ENCODE measurements at regions of chr1 and their contacts with region 1.

Region 1: DNA sequence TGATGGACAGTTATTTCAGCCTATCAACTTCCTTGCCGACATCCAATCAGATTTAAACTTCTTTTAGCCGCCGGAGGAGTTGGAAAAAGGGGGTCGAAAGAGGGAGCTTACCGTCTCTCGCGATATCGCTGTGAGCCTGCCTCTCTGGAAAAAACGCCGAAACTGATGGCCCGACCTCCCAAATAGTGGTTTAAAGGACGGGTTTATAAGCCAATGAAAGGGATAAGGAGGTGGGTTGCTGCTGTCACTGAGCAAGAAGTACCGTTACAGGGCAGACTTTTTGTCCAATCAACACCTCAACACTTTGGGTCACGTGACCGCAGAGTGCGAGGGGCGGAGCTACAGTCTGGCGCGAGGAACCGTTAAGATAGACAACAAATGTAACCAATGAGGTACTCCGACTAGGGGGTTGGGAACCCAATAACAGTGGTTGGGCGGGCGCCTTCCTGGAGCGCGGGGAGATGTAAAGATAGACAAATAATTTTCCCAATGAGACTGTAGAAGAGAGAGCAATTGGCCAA is at the start of gene RBM15:
- DNase-seq: peak; percentile 100
- H3K4me3 Mint-ChIP-seq: no peak within 1 kb of the TSS
- H3K27ac Mint-ChIP-seq: no peak within 1 kb of the TSS
- H3K4me1 Mint-ChIP-seq: peaks cover 39% of the 10 kb centered on the region
- H3K27me3 Mint-ChIP-seq: no peaks in the 10 kb centered on the region
- CTCF ChIP-seq: no peak
- total RNA-seq, gene RBM15: 31.4 and 35.9 TPM in 2 replicates

Region 2: DNA sequence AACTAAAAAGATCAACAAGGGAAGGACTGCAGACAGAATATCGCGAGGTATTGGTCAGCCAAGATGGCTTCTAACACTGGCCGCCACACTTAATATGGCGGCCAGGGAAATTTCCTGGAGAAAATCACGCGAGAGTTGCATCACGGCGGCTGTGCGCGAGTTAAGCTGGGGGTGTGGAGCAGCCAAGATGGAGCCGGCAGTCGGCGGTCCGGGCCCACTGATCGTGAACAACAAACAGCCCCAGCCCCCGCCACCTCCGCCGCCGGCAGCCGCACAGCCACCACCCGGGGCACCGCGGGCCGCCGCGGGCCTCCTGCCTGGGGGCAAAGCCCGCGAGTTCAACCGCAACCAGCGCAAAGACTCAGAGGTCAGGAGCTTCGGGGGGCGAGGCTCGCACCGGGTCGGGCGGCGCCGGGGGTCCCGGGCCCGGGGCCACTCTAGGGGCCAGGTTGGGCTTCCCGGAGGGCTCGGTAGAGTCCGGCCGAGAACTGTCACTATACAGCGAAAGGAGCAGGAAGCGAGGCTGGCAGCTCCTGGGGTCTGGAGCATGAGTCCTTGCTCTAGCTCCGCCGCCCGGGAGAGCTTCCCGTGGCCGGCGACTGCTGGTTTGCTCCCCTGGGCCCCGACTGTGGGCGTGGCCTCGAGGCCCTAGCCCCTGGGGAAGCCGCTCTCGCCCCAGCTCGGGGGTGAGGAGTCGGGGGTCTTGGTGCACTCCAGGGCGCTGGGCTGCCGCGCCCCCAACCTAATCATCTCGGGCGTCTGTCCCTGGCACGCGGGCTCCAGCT is 304.3 kb before region 1 on chr1 and contains the start of gene STRIP1:
- CTCF ChIA-PET with region 1: no interaction called
- POLR2A ChIA-PET with region 1: interaction called, 18 read pairs
- intact Hi-C with region 1: no loop called
- DNase-seq: peak; percentile 96
- H3K4me3 Mint-ChIP-seq: peak within 1 kb of the TSS; percentile 97
- H3K27ac Mint-ChIP-seq: peak within 1 kb of the TSS; percentile 94
- H3K4me1 Mint-ChIP-seq: peaks cover 18% of the 10 kb centered on the region
- H3K27me3 Mint-ChIP-seq: no peaks in the 10 kb centered on the region
- CTCF ChIP-seq: no peak
- total RNA-seq, gene STRIP1: 35.6 and 40.6 TPM in 2 replicates

Region 3: GRCh38 chr1:110176299-110176956 is 162.5 kb before region 1 on chr1:
- CTCF ChIA-PET with region 1: no interaction called
- POLR2A ChIA-PET with region 1: no interaction called
- intact Hi-C with region 1: no loop called
- DNase-seq: peak; percentile 59
- H3K4me3 Mint-ChIP-seq: no peak overlapping the region
- H3K27ac Mint-ChIP-seq: no peak overlapping the region
- H3K4me1 Mint-ChIP-seq: no peaks in the 10 kb centered on the region
- H3K27me3 Mint-ChIP-seq: peaks cover 11% of the 10 kb centered on the region
- CTCF ChIP-seq: no peak

Region 4: DNA sequence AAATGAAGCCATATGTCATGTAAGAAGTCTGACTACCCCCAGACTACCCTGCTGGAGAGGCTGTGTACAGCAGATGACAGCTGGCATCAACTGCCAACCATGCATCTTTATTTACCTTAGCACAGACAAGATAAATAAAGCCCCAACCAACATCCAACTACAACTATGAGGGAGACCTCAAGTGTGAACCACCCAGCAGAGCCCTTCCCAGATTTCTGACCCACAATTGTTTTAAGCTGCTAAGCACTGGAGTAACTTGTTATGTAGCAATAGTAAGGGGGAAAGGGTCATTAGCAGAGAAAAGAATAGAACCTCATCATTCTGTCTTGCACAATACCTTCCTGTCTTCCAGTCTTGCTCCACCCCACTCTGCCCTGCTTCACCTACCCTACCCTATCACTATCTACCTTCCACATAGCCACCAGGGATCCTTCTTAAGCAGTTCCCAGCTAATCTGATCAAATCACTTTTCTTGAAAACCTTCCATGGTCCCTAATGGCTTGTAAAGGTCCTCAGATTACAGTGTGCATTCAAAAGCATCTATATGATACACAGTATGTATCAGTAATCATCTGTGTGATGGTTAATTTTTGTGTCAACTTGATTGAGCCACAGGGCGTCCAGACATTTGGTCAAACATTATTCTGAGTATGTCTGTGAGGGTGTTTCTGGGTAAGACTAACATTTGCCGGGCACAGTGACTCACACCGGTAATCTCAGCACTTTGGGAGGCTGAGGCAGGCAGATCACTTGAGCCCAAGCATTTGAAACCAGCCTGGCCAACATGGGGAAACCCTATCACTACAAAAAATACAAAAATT is 19.4 kb before region 1 on chr1:
- CTCF ChIA-PET with region 1: interaction called, 4 read pairs
- POLR2A ChIA-PET with region 1: interaction called, 19 read pairs
- intact Hi-C with region 1: no loop called
- DNase-seq: peak; percentile 53
- H3K4me3 Mint-ChIP-seq: no peak overlapping the region
- H3K27ac Mint-ChIP-seq: no peak overlapping the region
- H3K4me1 Mint-ChIP-seq: no peaks in the 10 kb centered on the region
- H3K27me3 Mint-ChIP-seq: no peaks in the 10 kb centered on the region
- CTCF ChIP-seq: no peak

Region 5: GRCh38 chr1:110356405-110356804 is 17.5 kb after region 1 on chr1:
- CTCF ChIA-PET with region 1: no interaction called
- POLR2A ChIA-PET with region 1: interaction called, 90 read pairs
- intact Hi-C with region 1: no loop called
- DNase-seq: peak; percentile 47
- H3K4me3 Mint-ChIP-seq: no peak overlapping the region
- H3K27ac Mint-ChIP-seq: no peak overlapping the region
- H3K4me1 Mint-ChIP-seq: peaks cover 16% of the 10 kb centered on the region
- H3K27me3 Mint-ChIP-seq: no peaks in the 10 kb centered on the region
- CTCF ChIP-seq: no peak

Region 6: GRCh38 chr1:110390692-110391245 is 51.8 kb after region 1 on chr1 and contains the start of gene SLC16A4:
- CTCF ChIA-PET with region 1: interaction called, 6 read pairs
- POLR2A ChIA-PET with region 1: interaction called, 58 read pairs
- intact Hi-C with region 1: loop called (anchors 5 kb)
- DNase-seq: peak; percentile 55
- H3K4me3 Mint-ChIP-seq: peak within 1 kb of the TSS; percentile 66
- H3K27ac Mint-ChIP-seq: peak within 1 kb of the TSS; percentile 57
- H3K4me1 Mint-ChIP-seq: peaks cover 35% of the 10 kb centered on the region
- H3K27me3 Mint-ChIP-seq: no peaks in the 10 kb centered on the region
- CTCF ChIP-seq: no peak
- total RNA-seq, gene SLC16A4: 9.8 and 11.0 TPM in 2 replicates

Region 7: GRCh38 chr1:110412576-110412975 is 73.6 kb after region 1 on chr1:
- CTCF ChIA-PET with region 1: interaction called, 7 read pairs
- POLR2A ChIA-PET with region 1: interaction called, 114 read pairs
- intact Hi-C with region 1: no loop called
- DNase-seq: peak; percentile 84
- H3K4me3 Mint-ChIP-seq: no peak overlapping the region
- H3K27ac Mint-ChIP-seq: peak overlapping the region; percentile 17
- H3K4me1 Mint-ChIP-seq: peaks cover 12% of the 10 kb centered on the region
- H3K27me3 Mint-ChIP-seq: no peaks in the 10 kb centered on the region
- CTCF ChIP-seq: peak; percentile 87